PC-3 (cell line): ENCODE measurements at regions of chr13 and their contacts with region 1.

Region 1: DNA sequence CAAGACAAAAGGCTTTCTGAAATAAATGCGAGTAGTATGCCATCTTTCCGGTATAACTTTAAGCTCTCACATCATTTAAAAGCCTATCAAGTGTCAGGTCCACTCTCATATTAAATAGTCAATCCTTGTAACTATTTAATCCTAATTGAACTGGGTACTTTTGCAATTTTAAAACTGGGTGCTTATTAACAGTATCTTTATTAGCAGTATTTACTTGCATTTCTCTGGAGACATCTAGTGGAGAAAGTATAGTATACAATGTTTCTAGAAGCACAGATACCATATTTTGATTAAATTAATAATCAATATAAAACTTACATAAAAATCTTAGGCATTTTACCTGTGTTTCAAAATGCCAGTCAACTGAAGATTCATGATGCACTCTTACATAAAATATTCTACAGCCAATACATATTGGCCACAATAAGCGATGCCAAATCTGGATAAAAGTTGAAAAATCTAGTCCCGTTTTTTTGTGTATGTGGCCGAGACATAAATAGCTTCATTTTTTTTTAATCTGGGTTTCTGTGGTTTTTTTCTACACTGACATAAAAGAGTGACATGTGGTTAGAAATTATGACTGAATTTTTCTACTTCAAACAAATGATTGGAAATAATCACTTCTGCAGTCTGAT is 4.3 kb upstream of the POSTN start:
- DNase-seq: peak; percentile 6
- ATAC-seq: peak; percentile 42; the same call in 1 of the 2 replicates
- H3K4me3 ChIP-seq: no peak overlapping the region
- H3K27ac ChIP-seq: no peak overlapping the region
- H3K4me1 ChIP-seq: no peaks in the 10 kb centered on the region
- H3K27me3 ChIP-seq: peaks cover 40% of the 10 kb centered on the region
- CTCF ChIP-seq: peak; percentile 58

Region 2: DNA sequence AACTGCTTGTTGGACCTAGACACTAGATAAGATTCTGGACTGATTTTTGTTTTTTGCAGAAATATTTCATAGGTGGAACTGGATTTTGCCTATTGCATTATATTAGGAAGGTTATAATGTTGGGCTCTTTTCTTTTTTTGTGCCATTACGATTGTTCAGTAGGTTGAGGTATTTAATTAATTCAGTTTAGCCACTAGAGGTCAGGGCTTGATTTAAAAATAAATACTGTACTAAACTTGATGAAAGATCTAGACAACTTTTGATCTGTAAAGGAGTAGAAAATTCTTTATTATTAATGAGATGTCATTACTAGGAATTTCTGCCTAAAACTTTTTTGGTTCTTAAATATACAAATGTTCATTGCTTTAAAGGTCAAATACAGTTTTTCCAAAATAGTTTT is 528.2 kb before region 1 on chr13:
- CTCF ChIA-PET with region 1: no interaction called
- POLR2A ChIA-PET with region 1: no interaction called
- intact Hi-C with region 1: loop called (anchors 1 kb)
- DNase-seq: peak; percentile 48
- ATAC-seq: peak; percentile 61; the same call in 1 of the 2 replicates
- H3K4me3 ChIP-seq: no peak overlapping the region
- H3K27ac ChIP-seq: no peak overlapping the region
- H3K4me1 ChIP-seq: 0 out of 2 replicates have a peak, but pooled peaks cover 4% of the 10 kb centered on the region
- H3K27me3 ChIP-seq: no peaks in the 10 kb centered on the region
- CTCF ChIP-seq: peak; percentile 58

Region 3: DNA sequence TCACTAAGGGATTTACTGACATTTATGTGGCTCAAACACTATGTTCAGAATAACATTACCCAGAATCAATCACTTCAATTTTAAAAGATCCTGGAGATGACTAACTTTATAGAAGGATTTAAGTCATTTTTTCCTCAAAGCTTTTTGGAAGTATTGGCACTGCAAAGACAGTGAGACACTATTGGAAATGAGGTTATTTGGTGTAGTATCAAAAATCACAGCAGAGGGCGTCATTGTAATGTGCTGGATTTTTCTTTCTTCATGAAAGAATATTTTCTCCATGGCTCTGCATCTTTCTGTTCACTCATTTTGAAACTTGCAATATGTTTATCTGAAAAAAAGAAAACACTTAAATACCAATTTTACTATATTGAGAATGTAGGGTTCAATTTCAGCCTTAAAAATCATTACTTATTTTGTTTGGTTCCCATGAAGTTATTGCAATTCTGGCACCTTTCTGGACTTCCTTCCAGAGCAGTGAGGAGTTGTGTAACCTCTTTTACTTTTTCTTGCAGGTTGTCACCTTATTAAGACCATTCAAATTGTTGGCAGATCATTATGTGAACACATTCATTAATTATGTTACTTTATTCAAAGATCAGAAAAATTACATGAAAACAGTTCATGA is 493.7 kb before region 1 on chr13:
- CTCF ChIA-PET with region 1: no interaction called
- POLR2A ChIA-PET with region 1: no interaction called
- intact Hi-C with region 1: loop called (anchors 1 kb)
- DNase-seq: peak; percentile 50
- ATAC-seq: peak; percentile 55; the same call in 1 of the 2 replicates
- H3K4me3 ChIP-seq: no peak overlapping the region
- H3K27ac ChIP-seq: no peak overlapping the region
- H3K4me1 ChIP-seq: peaks cover 10% of the 10 kb centered on the region; the same call in 1 of the 2 replicates
- H3K27me3 ChIP-seq: peaks cover 5% of the 10 kb centered on the region; the same call in 1 of the 2 replicates
- CTCF ChIP-seq: peak; percentile 70

Region 4: GRCh38 chr13:37736045-37736444 is 133.2 kb after region 1 on chr13:
- CTCF ChIA-PET with region 1: no interaction called
- POLR2A ChIA-PET with region 1: no interaction called
- intact Hi-C with region 1: no loop called
- DNase-seq: no peak
- ATAC-seq: no peak
- H3K4me3 ChIP-seq: no peak overlapping the region
- H3K27ac ChIP-seq: no peak overlapping the region
- H3K4me1 ChIP-seq: no peaks in the 10 kb centered on the region
- H3K27me3 ChIP-seq: no peaks in the 10 kb centered on the region
- CTCF ChIP-seq: no peak

Region 5: DNA sequence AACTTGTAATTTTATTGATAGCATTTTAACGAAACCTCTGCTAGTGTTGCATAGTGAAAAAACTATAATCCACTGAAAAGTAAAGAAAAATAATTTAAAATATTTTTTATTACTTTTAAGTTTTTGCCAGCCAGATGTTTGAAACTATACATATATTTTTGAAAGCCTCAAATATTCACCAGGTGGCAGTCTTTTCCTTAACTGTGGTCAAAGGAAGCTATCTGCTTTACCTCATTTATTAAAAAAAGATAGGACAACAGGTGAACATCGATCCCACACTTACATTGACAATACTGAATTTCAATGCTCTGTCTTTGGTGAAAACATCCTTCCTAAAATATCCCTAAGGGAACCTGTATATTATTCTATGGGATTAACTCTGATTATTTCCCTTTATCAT is 166.2 kb after region 1 on chr13:
- CTCF ChIA-PET with region 1: no interaction called
- POLR2A ChIA-PET with region 1: no interaction called
- intact Hi-C with region 1: no loop called
- DNase-seq: peak; percentile 21
- ATAC-seq: no peak
- H3K4me3 ChIP-seq: no peak overlapping the region
- H3K27ac ChIP-seq: no peak overlapping the region
- H3K4me1 ChIP-seq: no peaks in the 10 kb centered on the region
- H3K27me3 ChIP-seq: peaks cover 25% of the 10 kb centered on the region; the same call in 1 of the 2 replicates
- CTCF ChIP-seq: peak; percentile 37